Right cardiac atrium (tissue), 5 donors: ENCODE measurements at regions of chr1 and their contacts with region 1.

Region 1: DNA sequence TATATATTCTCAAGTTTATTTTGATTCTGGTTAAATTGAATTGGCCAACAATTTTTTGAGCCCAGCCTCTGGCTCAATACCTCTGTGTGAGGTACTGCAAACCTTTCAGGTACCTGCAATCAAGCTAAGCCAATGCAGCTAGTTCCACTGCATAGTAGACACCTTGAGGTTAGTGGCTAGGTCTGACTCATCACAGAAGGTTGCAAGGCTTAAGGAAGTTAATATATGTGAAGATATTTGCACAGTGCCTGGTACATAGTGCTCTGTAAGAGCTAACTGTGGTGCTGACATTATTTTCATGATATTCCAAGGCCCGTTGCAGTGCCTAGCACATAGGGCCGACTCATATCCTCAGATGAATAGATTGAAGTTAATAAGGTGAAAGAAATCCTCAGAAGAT is 330.5 kb upstream of the KAZN start:
- DNase-seq: no peak
- ATAC-seq: no peak
- H3K4me3 ChIP-seq: no peak overlapping the region
- H3K27ac ChIP-seq: no peak overlapping the region
- H3K4me1 ChIP-seq: no peaks in the 10 kb centered on the region
- H3K27me3 ChIP-seq: no peaks in the 10 kb centered on the region

Region 2: DNA sequence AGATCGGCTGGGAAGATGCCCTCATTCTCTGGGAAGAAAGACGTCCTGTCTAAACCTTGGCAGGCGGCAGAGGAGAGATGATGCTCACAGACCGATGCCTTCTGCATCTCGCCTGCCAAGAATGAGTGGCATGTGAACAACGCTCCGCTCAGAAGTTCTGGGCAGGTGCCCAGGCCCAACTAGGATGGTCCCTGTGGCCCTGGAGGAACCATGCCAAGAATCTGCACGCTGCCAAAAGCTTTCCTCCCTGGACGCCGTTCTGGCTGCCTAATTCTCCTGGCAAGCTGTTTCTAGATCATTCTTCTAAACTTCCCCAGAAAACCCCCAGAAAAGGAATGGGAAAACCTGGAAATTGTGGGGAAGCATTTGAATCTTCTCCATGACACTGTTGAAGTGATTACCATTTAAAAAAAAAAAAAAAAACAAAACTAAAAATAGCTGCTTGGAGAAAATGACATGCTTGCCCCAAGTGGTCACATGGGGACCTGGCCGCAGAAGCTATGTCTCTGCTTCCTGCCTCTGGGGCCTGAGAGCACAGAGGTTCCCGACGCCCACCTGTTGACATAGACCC is 127.1 kb before region 1 on chr1:
- intact Hi-C with region 1: no loop called
- DNase-seq: peak; percentile 78 to 91 (median 88)
- ATAC-seq: peak; percentile 82 to 85
- H3K4me3 ChIP-seq: no peak overlapping the region
- H3K27ac ChIP-seq: no peak overlapping the region
- H3K4me1 ChIP-seq: peaks cover 7% of the 10 kb centered on the region
- H3K27me3 ChIP-seq: no peaks in the 10 kb centered on the region

Region 3: DNA sequence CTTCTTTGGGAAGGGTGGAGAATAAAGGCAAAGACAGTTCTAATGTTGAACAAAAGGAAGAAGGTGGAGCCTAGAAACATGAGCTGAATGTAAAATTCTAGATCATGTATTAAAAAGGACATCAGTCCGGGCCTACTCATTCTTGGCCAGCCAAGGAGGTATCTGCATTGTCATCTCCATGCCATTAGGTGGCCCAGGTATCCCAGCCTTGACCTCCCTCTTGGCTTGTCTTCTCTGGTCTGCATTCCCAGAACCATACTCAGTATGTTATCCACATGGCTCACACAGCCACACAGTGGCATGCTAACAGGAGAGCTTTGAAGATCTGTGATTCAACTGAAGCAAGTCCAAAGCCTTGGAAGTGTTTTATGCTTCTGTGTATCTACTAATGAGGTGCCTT is 39.3 kb before region 1 on chr1:
- intact Hi-C with region 1: no loop called
- DNase-seq: no peak
- ATAC-seq: no peak
- H3K4me3 ChIP-seq: no peak overlapping the region
- H3K27ac ChIP-seq: no peak overlapping the region
- H3K4me1 ChIP-seq: no peaks in the 10 kb centered on the region
- H3K27me3 ChIP-seq: no peaks in the 10 kb centered on the region

Region 4: GRCh38 chr1:14366091-14367018 is 98.4 kb after region 1 on chr1:
- intact Hi-C with region 1: loop called in 1 of 4 experiments (anchors 10 kb)
- DNase-seq: peak; percentile 71 to 83 (median 81)
- ATAC-seq: peak; percentile 78 to 89
- H3K4me3 ChIP-seq: no peak overlapping the region
- H3K27ac ChIP-seq: no peak overlapping the region
- H3K4me1 ChIP-seq: no peaks in the 10 kb centered on the region
- H3K27me3 ChIP-seq: no peaks in the 10 kb centered on the region

Region 5: DNA sequence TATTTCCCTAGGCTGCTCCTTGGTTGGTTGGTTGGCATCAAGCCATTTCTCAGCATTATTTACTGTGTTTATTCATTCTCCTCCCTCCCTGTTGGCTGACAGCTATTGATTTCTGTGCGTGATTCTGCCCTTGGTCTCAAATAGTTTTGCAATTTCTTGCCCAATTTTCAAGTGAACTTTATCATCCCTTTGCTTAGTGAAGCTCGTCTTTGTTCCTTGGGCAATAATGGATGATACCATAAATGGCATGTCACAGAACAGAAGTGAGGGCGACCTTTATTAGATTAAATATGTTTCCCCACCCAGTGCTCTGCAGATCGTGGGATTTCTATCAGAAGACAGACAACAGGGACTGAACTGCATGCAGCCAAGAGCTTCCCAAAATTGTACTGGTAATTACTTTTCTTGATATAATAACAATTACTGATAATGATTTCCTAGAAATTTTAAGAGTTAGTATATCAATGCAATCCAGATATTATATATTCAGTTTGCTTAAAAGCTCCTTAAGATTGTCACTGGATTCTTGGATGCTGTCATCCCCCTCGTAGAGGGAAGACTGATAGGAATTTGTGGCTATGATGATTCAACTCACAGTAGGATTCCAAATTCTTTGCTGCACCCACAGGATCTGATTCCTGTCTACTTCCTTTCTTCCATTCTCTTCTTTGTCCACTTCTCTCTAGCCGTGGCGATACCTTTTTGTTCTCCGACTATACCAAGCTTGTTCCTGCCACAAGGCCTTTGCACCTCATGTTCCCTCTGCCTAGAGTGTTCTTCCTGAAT is 208.4 kb after region 1 on chr1:
- intact Hi-C with region 1: no loop called
- DNase-seq: no peak
- ATAC-seq: no peak
- H3K4me3 ChIP-seq: no peak overlapping the region
- H3K27ac ChIP-seq: no peak overlapping the region
- H3K4me1 ChIP-seq: no peaks in the 10 kb centered on the region
- H3K27me3 ChIP-seq: no peaks in the 10 kb centered on the region